Dendritic cell treated with granulocyte-macrophage colony-stimulating factor and Interleukin-4, amounts not matched to agents 40 ng/mL and 50 ng/mL, for 4 days (primary cell): ENCODE measurements at regions of chr4 and their contacts with region 1.

Region 1: DNA sequence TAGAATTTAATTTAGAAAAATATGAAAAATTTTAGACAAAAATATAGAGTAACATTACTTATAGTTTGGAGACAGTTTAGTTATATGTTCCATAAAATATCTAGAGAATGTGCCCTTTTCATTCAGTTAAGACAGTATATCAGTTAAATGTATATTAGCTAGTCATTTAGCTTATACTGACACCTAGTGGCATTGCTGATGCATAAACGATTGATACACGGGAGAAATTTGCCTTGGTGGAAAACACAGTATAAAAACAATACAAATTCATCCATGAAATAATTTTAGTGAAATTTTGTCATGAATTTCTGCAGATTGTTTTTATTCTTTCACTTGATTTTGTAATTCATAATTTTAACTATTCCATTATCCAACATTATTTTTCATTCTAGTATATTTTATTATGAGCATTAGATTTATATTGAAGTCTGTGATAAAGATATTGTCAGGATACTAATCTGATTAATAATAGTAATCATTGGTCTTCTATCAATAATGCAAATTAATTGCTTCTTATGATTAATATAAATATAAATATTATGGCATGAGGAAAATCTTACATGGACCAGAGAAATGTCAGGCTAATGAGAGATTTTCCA is 219.0 kb downstream of the TLL1 start:
- H3K4me3 Mint-ChIP-seq: no peak overlapping the region
- H3K27ac Mint-ChIP-seq: no peak overlapping the region
- H3K4me1 Mint-ChIP-seq: no peaks in the 10 kb centered on the region
- H3K27me3 Mint-ChIP-seq: no peaks in the 10 kb centered on the region

Region 2: GRCh38 chr4:165493359-165493758 is 598.7 kb before region 1 on chr4:
- intact Hi-C with region 1: loop called (anchors 1 kb)
- H3K4me3 Mint-ChIP-seq: peak overlapping the region; percentile 2
- H3K27ac Mint-ChIP-seq: no peak overlapping the region
- H3K4me1 Mint-ChIP-seq: peaks cover 5% of the 10 kb centered on the region
- H3K27me3 Mint-ChIP-seq: peaks cover 24% of the 10 kb centered on the region

Region 3: DNA sequence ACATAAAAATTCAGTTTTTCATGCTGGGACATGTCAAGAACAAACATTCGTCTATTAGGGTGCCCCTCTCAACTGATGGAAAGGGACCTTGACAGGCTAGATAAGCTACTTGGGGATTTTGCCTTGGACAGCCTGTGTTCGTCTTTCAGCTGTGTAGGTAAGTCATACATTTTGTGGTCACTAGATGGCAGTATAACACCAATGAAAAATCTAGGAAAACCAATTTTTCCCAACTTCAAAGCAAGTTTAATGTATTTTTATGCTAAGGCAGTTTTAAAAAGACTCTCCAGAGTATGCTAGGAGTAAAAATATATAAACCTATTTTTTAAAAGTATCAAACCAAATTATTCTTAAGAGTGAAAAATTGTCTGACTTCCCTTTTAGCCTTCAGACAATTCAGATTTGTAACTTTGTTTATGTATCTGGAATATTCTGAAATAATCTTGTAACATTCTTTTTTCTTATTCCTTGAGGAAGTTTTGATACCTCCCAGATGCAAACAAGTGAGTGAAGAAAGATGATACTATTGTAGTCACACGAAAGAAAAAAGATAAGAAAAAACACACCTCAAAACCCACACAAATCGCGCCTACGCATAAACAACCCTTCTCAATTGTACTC is 554.9 kb before region 1 on chr4:
- intact Hi-C with region 1: loop called (anchors 2 kb)
- H3K4me3 Mint-ChIP-seq: no peak overlapping the region
- H3K27ac Mint-ChIP-seq: no peak overlapping the region
- H3K4me1 Mint-ChIP-seq: no peaks in the 10 kb centered on the region
- H3K27me3 Mint-ChIP-seq: no peaks in the 10 kb centered on the region